Calu3 (cell line): ENCODE measurements at regions of chr1 and their contacts with region 1.

Region 1: DNA sequence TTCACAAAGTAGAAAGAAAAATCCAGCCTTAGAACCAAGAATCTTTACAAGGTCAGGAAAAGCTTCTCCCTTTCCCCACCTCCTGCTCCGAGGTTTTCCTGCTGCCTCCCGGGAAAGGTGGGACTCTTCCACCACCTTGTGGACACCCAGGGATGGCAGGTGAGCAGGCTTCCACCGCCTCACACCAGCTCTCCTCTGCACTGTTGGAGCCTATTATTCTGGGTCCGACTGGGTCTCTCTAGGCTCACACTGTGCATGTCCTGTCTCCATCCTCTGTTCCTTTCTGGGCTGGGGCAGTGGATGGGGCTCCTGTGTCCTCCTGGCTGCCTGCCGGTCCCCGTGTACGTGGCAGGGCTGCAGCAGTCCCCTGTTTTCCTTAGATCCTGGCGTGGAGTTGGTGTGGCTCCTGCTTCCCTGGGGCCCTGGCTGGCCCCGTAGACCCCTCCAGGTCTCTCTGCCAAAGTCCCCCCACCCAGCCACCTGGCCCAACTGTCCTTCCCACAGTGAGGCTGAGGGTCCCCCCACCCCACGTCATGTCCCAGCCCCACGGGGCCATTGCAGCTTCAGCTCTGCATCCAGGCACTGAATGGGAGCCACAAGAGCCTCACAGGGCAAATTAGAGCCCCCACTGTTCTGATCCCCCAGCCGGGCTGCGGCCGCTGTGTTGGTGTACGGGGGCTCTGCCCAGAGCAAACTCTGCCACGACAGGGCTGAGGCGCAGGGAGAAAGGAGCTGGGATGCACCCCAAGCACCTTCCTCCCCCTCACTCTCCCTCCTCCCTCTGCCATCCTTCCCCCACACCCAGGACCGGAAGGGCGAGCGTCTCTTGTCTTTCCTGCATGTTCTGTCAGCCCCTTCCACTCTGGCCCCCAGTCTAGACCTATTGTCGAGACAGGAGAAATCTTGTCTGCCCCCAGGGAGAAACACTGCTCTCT is 3.3 kb upstream of the SLC45A1 start:
- DNase-seq: peak; percentile 82
- H3K4me3 Mint-ChIP-seq: no peak overlapping the region
- H3K27ac Mint-ChIP-seq: no peak overlapping the region
- H3K4me1 Mint-ChIP-seq: peaks cover 38% of the 10 kb centered on the region
- H3K27me3 Mint-ChIP-seq: no peaks in the 10 kb centered on the region
- CTCF ChIP-seq: peak; percentile 70

Region 2: GRCh38 chr1:7975212-7975865 is 339.3 kb before region 1 on chr1:
- CTCF ChIA-PET with region 1: interaction called, 10 read pairs
- intact Hi-C with region 1: no loop called
- DNase-seq: peak; percentile 83
- H3K4me3 Mint-ChIP-seq: no peak overlapping the region
- H3K27ac Mint-ChIP-seq: no peak overlapping the region
- H3K4me1 Mint-ChIP-seq: no peaks in the 10 kb centered on the region
- H3K27me3 Mint-ChIP-seq: no peaks in the 10 kb centered on the region
- CTCF ChIP-seq: peak; percentile 88

Region 3: DNA sequence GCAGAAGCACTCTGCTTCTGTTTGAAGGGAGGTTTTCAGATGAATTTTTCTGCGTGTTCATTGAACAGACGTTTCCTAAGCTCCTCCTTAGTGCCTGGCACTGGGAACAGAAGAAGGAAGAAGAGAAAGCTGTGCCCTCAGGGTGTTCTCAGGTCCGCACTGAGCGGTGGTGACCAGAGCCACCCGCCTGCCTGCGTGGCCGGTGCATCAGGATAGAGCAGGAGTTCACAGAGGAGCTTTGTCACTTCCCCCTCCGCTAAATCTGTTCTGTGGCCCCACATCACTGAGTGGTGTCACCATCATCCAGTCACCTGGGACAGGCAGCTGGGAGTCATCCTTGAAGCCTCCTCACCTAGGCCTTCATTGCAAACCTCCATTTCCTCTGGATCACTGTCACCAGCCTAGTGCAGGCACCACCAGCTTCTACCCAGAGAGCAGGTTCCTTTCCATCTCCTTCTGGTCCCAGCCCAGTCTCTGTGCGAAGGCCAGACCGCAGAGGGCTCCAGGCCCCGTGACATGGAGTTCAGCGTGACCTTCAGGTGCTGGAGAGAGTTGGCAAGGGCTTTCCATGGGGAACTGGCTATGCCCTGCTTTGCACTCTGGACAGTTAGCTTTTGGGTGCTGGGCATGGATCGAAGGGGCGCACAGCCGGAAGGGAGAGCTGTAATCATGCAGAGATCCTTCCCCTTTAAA is 331.4 kb before region 1 on chr1:
- CTCF ChIA-PET with region 1: interaction called, 5 read pairs
- intact Hi-C with region 1: loop called (anchors 1 kb)
- DNase-seq: no peak
- H3K4me3 Mint-ChIP-seq: no peak overlapping the region
- H3K27ac Mint-ChIP-seq: no peak overlapping the region
- H3K4me1 Mint-ChIP-seq: no peaks in the 10 kb centered on the region
- H3K27me3 Mint-ChIP-seq: no peaks in the 10 kb centered on the region
- CTCF ChIP-seq: no peak

Region 4: DNA sequence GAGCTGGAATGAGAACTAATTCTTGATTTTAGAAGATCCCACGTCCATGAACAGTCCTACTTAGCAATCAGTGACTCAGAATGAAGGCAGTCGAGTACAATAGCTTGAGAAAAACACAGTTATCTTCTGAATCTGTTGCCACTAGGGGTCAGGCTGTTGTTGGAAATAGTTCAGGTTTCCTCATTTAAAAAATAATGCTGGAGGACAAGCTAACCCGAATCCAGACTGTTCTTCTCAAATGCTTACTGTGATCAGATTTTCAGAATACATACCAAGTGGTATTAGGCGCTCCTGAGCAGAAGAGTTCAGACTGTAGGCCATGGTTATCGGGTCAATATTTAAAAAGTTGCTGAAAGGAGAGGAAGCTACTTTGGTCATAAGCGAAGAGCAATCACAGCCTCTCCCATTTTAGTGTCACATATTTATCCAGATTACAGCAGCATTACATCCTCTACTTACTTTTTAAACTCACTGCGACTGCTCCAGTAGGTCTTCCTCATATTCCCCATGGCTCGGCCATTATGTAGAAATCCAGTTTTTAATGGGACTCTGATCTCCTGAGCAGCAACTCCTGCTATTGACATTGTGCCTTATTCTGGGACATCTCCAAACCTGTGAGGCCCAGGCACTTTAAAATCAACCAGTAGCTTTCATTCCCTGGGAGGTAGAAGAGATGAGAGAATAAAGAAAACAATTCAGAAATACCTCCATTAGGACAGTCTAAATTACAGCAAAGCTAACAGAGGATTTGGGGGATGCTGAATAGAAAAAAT is 299.4 kb before region 1 on chr1:
- CTCF ChIA-PET with region 1: interaction called, 25 read pairs
- intact Hi-C with region 1: no loop called
- DNase-seq: peak; percentile 45
- H3K4me3 Mint-ChIP-seq: peak overlapping the region; percentile 57
- H3K27ac Mint-ChIP-seq: peak overlapping the region; percentile 71
- H3K4me1 Mint-ChIP-seq: peaks cover 62% of the 10 kb centered on the region
- H3K27me3 Mint-ChIP-seq: no peaks in the 10 kb centered on the region
- CTCF ChIP-seq: peak; percentile 46

Region 5: GRCh38 chr1:8026153-8026975 is 288.2 kb before region 1 on chr1 and contains the start of gene ERRFI1:
- CTCF ChIA-PET with region 1: interaction called, 9 read pairs
- intact Hi-C with region 1: loop called (anchors 1 kb)
- DNase-seq: peak; percentile 94
- H3K4me3 Mint-ChIP-seq: peak within 1 kb of the TSS; percentile 97
- H3K27ac Mint-ChIP-seq: peak within 1 kb of the TSS; percentile 100
- H3K4me1 Mint-ChIP-seq: peaks cover 25% of the 10 kb centered on the region
- H3K27me3 Mint-ChIP-seq: no peaks in the 10 kb centered on the region
- CTCF ChIP-seq: no peak
- total RNA-seq, gene ERRFI1: 74.9 and 83.0 TPM in 2 replicates

Region 6: GRCh38 chr1:8154621-8155052 is 160.0 kb before region 1 on chr1:
- CTCF ChIA-PET with region 1: interaction called, 11 read pairs
- intact Hi-C with region 1: no loop called
- DNase-seq: peak; percentile 77
- H3K4me3 Mint-ChIP-seq: peak overlapping the region; percentile 60
- H3K27ac Mint-ChIP-seq: peak overlapping the region; percentile 95
- H3K4me1 Mint-ChIP-seq: peaks cover 20% of the 10 kb centered on the region
- H3K27me3 Mint-ChIP-seq: no peaks in the 10 kb centered on the region
- CTCF ChIP-seq: no peak

Region 7: GRCh38 chr1:8259498-8260290 is 54.9 kb before region 1 on chr1:
- CTCF ChIA-PET with region 1: interaction called, 5 read pairs
- intact Hi-C with region 1: loop called (anchors 10 kb)
- DNase-seq: peak; percentile 66
- H3K4me3 Mint-ChIP-seq: peak overlapping the region; percentile 10
- H3K27ac Mint-ChIP-seq: peak overlapping the region; percentile 82
- H3K4me1 Mint-ChIP-seq: peaks cover 38% of the 10 kb centered on the region
- H3K27me3 Mint-ChIP-seq: no peaks in the 10 kb centered on the region
- CTCF ChIP-seq: no peak